Activated CD8-positive, alpha-beta memory T cell treated with anti-CD3 and anti-CD28 coated beads, Interleukin-2, amount 10 ng/mL, durations not matched to agents 7 days and 5 days (primary cell): ENCODE measurements at regions of chr1 and their contacts with region 1.

Region 1: GRCh38 chr1:29202584-29203340 is 21.1 kb upstream of the SRSF4 start:
- DNase-seq: peak; percentile 93
- ATAC-seq: peak; percentile 96
- H3K4me3 Mint-ChIP-seq: no peak overlapping the region
- H3K27ac Mint-ChIP-seq: peak overlapping the region; percentile 71
- H3K4me1 Mint-ChIP-seq: peaks cover 20% of the 10 kb centered on the region
- H3K27me3 Mint-ChIP-seq: no peaks in the 10 kb centered on the region

Region 2: DNA sequence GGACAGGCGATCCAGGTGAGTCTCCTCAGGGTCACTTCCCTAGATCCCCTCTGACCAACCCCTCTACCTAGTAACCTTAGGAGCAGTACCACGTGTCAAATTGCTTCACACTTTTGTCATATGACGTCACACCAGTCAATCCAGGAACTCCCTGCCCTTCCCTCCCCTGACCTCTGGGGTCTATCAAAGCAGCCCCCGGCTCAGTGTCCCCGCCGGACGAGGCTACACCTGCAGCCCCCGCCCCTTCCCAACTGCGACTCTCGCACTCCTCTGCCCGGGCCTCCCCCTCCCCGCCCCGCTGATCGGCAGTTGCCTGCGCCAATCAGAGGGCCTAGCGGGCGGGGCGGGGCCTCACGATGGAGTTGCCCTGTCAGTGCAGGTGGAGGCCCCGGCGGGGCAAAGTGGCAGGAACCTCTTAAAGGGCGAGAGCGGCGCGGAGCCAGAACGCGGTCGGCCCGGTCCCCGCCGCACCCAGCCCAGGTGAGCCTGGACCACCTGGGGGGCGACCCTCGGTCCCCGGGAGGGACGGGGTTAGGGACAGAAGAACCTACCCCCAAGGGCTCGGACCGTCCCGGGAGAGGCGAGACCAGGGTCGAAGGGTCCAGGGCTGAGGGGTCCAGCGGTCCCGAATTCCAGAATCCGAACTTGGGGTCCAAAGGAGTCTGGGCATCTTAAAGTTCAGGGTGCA is 315.9 kb before region 1 on chr1:
- CTCF ChIA-PET with region 1: interaction called, 247 read pairs
- DNase-seq: peak; percentile 92
- ATAC-seq: peak; percentile 87
- H3K4me3 Mint-ChIP-seq: peak overlapping the region; percentile 84
- H3K27ac Mint-ChIP-seq: peak overlapping the region; percentile 96
- H3K4me1 Mint-ChIP-seq: peaks cover 52% of the 10 kb centered on the region
- H3K27me3 Mint-ChIP-seq: no peaks in the 10 kb centered on the region

Region 3: GRCh38 chr1:29113413-29114117 is 89.2 kb before region 1 on chr1:
- CTCF ChIA-PET with region 1: interaction called, 11 read pairs
- DNase-seq: no peak
- ATAC-seq: peak; percentile 57
- H3K4me3 Mint-ChIP-seq: no peak overlapping the region
- H3K27ac Mint-ChIP-seq: no peak overlapping the region
- H3K4me1 Mint-ChIP-seq: peaks cover 10% of the 10 kb centered on the region
- H3K27me3 Mint-ChIP-seq: no peaks in the 10 kb centered on the region

Region 4: GRCh38 chr1:29171089-29171488 is 31.7 kb before region 1 on chr1:
- CTCF ChIA-PET with region 1: interaction called, 14 read pairs
- DNase-seq: no peak
- ATAC-seq: peak; percentile 26
- H3K4me3 Mint-ChIP-seq: peak overlapping the region; percentile 0
- H3K27ac Mint-ChIP-seq: peak overlapping the region; percentile 70
- H3K4me1 Mint-ChIP-seq: peaks cover 62% of the 10 kb centered on the region
- H3K27me3 Mint-ChIP-seq: no peaks in the 10 kb centered on the region

Region 5: GRCh38 chr1:29245876-29246275 is 43.1 kb after region 1 on chr1:
- CTCF ChIA-PET with region 1: no interaction called
- DNase-seq: no peak
- ATAC-seq: no peak
- H3K4me3 Mint-ChIP-seq: no peak overlapping the region
- H3K27ac Mint-ChIP-seq: no peak overlapping the region
- H3K4me1 Mint-ChIP-seq: no peaks in the 10 kb centered on the region
- H3K27me3 Mint-ChIP-seq: peaks cover 9% of the 10 kb centered on the region

Region 6: DNA sequence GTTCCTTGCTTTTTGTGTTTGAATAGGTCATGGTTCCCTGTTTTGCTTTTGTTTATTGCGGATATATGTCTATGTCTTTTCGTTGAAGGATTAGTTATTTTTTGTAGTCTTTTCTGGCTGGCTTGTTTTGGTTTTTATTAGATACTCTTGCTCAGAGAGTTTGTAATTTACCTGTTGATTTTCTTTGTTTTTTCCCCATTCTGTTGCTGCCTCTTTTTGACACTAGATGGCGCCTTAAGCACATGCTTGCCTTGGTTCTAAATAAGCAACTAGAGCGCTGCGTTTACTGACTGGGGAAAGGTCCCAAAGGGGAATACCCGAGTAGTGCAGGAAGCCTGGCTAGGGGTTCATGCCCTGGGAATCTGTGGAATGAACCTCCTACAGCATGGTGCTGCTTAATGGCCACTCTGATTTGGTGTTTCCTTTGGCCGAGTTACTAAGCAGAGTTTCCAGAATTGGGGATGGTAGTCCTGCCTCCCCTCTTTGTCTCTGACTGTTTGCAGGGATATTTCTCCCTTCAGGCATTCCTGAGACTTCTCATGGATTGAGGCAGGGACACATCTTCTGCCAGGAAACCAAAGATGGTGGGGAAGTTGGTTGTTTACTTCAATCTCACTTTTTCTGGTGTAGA is 176.8 kb after region 1 on chr1:
- CTCF ChIA-PET with region 1: no interaction called
- DNase-seq: peak; percentile 38
- ATAC-seq: no peak
- H3K4me3 Mint-ChIP-seq: no peak overlapping the region
- H3K27ac Mint-ChIP-seq: no peak overlapping the region
- H3K4me1 Mint-ChIP-seq: no peaks in the 10 kb centered on the region
- H3K27me3 Mint-ChIP-seq: peaks cover 19% of the 10 kb centered on the region